ENCODE measurements at regions of chr10 and their contacts with region 1.

Region 1: DNA sequence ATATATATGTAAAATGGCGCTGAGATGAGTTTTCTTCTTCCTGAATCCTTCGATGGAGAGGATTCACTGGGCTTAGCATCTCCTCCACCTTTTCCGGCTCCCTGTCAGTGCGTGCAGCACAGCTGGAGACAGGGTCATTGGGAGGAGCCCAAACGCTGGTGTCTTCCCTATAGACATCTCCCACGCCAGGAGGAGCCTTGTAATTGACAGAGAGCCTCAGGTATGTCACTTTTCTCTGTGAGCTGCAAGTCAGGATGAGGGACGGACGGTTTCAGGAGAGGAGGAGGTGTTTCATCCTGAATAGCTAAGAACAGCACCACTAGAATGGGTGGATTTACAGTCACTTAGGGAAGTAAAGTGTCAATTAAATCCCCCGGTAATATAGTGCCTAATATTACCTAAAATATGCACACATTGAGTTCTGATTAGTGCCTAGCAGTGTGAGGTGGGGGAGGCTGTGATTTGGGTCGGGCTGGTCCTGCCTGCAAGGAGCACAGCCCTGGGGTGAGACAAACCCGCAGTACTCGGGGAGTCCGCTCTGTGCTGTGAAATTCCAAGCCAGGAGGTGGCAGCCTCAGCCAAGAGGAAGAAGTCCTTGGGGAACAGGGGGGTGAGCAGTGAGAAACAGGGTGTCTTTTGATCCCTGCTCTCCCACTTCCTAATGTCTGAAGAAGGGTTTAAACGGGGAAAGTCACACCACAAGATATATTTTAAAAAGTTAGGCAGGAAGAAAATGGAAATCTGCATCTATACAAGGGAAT is 28.2 kb downstream of the IL15RA start:
- DNase-seq: peak; percentile 62 to 84 (median 80)
- ATAC-seq: peak; percentile 31 to 50
- H3K4me3 ChIP-seq: no peak overlapping the region
- H3K27ac ChIP-seq: no peak overlapping the region
- H3K4me1 ChIP-seq: peaks cover 9% of the 10 kb centered on the region
- H3K27me3 ChIP-seq: no peaks in the 10 kb centered on the region

Region 2: GRCh38 chr10:6088721-6089390 is 139.7 kb after region 1 on chr10 and contains the start of gene RBM17:
- intact Hi-C with region 1: loop called in 1 of 4 experiments (anchors 10 kb)
- DNase-seq: peak; percentile 96 to 99 (median 98)
- ATAC-seq: peak; percentile 92 to 95
- H3K4me3 ChIP-seq: peak within 1 kb of the TSS; percentile 96
- H3K27ac ChIP-seq: peak within 1 kb of the TSS; percentile 87
- H3K4me1 ChIP-seq: peaks cover 3% of the 10 kb centered on the region
- H3K27me3 ChIP-seq: no peaks in the 10 kb centered on the region
- total RNA-seq, gene RBM17: 51.6 to 66.5 (median 57.1) TPM